ENCODE measurements at regions of chr16 and their contacts with region 1.

Region 1: DNA sequence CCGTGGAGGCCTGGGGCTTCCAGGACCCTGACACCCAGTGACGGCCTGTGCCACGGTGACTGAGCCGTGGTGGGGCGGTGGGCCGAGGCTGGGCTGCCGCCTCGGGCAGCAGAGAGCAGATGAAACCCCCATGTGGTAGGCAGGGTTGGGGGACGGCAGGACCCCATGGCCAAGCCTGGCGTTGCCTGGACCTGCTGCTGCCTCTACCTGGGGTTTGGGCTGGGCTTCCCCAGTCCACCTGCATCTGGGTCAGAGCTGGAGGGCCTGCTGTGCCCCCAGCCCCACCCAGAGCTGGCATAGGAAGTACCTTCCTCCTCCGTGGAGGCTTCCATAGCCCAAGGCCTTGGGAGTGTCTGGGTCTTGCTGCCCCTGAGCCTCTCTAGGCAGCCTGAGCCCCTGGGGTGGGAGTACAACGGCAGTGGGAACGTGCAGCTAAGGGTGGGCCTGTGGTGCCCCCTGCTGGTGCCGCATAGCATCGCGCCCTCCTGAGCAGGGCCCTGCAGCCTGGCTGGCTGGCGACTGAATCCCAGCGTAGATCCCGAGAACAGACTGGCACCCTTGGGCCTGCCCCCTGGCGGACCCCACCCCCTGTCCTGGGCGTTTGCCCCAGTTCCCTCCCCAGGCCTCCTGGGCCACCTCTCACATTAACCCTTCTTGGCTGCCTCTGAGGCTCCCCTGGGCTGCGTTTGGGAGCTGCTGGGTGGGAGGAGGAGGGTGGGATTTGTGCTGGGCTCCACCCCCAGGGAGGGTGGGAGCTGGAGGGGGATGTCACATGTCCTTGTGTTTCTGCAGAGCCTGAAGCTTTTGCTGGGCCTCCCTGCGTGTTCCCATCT is 12.6 kb upstream of the ATP6V0C start:
- DNase-seq: peak; percentile 69
- ATAC-seq: peak; percentile 97
- H3K4me3 ChIP-seq: no peak overlapping the region
- H3K27ac ChIP-seq: no peak overlapping the region
- H3K4me1 ChIP-seq: peaks cover 9% of the 10 kb centered on the region
- H3K27me3 ChIP-seq: no peaks in the 10 kb centered on the region
- CTCF ChIP-seq: peak; percentile 96
- POLR2A ChIP-seq: 0 out of 2 replicates have a peak, but pooled peaks have one; percentile 29
- RAD21 ChIP-seq: peak; percentile 95

Region 2: GRCh38 chr16:2251483-2252240 is 249.5 kb before region 1 on chr16 and contains the start of gene ECI1:
- CTCF ChIA-PET with region 1: no interaction called
- POLR2A ChIA-PET with region 1: no interaction called
- dilution Hi-C with region 1: no loop called
- in situ Hi-C with region 1: loop called (anchors 10 kb)
- intact Hi-C with region 1: no loop called
- DNase-seq: peak; percentile 92
- ATAC-seq: peak; percentile 99
- H3K4me3 ChIP-seq: peak within 1 kb of the TSS; percentile 52
- H3K27ac ChIP-seq: peak within 1 kb of the TSS; percentile 60
- H3K4me1 ChIP-seq: peaks cover 9% of the 10 kb centered on the region
- H3K27me3 ChIP-seq: no peaks in the 10 kb centered on the region
- CTCF ChIP-seq: peak; percentile 74
- POLR2A ChIP-seq: no peak; the same call in none of the 2 replicates
- RAD21 ChIP-seq: peak; percentile 64
- total RNA-seq, gene ECI1: 20.3 TPM in 2 replicates

Region 3: DNA sequence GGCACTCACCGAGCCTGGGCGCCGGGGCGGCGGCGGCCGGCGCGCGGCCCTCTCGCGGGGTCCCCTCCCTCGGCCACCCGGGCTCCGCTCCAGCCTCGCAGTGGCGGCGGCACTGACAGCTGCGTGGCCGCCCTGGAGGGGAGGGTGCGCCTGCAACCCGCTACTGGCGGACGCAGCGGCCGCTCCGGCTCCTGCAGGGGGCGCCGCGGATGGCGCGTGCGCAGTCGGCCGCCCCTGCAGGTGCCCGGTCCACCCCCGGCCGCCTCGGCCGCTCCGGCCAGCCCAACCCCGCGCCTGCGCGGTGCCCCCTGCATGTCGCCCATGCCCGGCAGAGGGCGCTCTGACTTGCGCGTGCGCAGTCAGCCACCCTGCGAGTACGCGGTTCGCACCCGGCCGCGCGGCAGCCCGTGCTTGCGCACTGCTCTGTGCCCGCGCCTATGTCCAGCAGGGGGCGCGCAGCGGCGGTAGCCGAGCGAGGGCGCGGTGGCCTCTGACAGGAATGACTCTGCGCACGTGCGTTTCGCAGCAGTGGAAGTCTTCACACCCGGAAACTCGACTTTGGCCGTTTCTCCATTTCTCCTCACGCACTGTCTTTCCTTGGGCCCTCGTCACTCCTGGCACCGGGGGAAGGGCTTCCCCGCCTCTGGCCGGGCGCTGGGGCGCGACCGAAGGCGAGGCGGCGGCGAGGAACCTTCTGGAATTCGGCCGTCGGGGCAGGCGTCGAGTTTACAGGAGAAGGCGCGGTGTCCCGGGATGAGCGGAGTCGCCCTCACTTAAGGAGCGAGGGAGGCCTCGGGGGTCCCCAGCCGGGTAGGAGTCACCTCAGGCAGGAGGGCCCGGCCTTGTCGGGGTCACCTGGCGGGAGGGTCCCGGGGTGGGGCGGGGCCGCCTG is 160.3 kb before region 1 on chr16 and contains the start of gene ABCA3:
- CTCF ChIA-PET with region 1: no interaction called
- POLR2A ChIA-PET with region 1: no interaction called
- dilution Hi-C with region 1: no loop called
- in situ Hi-C with region 1: loop called (anchors 5 kb)
- intact Hi-C with region 1: loop called (anchors 1 kb)
- DNase-seq: peak; percentile 84
- ATAC-seq: peak; percentile 97
- H3K4me3 ChIP-seq: peak within 1 kb of the TSS; percentile 57
- H3K27ac ChIP-seq: no peak within 1 kb of the TSS
- H3K4me1 ChIP-seq: no peaks in the 10 kb centered on the region
- H3K27me3 ChIP-seq: peaks cover 46% of the 10 kb centered on the region
- CTCF ChIP-seq: peak; percentile 100
- POLR2A ChIP-seq: no peak
- RAD21 ChIP-seq: peak; percentile 76
- total RNA-seq, gene ABCA3: 0.18 TPM in 1 of 2 replicates, not detected in the other

Region 4: GRCh38 chr16:2474877-2475412 is 26.2 kb before region 1 on chr16 and contains the start of gene TBC1D24:
- CTCF ChIA-PET with region 1: no interaction called
- POLR2A ChIA-PET with region 1: no interaction called
- dilution Hi-C with region 1: no loop called
- in situ Hi-C with region 1: no loop called
- intact Hi-C with region 1: loop called (anchors 1 kb)
- DNase-seq: peak; percentile 72
- ATAC-seq: peak; percentile 79
- H3K4me3 ChIP-seq: peak within 1 kb of the TSS; percentile 92
- H3K27ac ChIP-seq: peak within 1 kb of the TSS; percentile 92
- H3K4me1 ChIP-seq: peaks cover 15% of the 10 kb centered on the region
- H3K27me3 ChIP-seq: no peaks in the 10 kb centered on the region; the same call in 1 of the 2 replicates
- CTCF ChIP-seq: no peak
- POLR2A ChIP-seq: peak; percentile 40; the same call in 1 of the 2 replicates
- RAD21 ChIP-seq: no peak
- total RNA-seq, gene TBC1D24: 7.5 and 8.6 TPM in 2 replicates

Region 5: GRCh38 chr16:2739625-2740435 is 238.7 kb after region 1 on chr16:
- CTCF ChIA-PET with region 1: no interaction called
- POLR2A ChIA-PET with region 1: no interaction called
- dilution Hi-C with region 1: no loop called
- in situ Hi-C with region 1: no loop called
- intact Hi-C with region 1: no loop called
- DNase-seq: no peak
- ATAC-seq: 0 out of 2 replicates have a peak, but pooled peaks have one; percentile 25
- H3K4me3 ChIP-seq: no peak overlapping the region
- H3K27ac ChIP-seq: no peak overlapping the region
- H3K4me1 ChIP-seq: no peaks in the 10 kb centered on the region
- H3K27me3 ChIP-seq: no peaks in the 10 kb centered on the region; the same call in 1 of the 2 replicates
- CTCF ChIP-seq: no peak
- POLR2A ChIP-seq: no peak
- RAD21 ChIP-seq: no peak